Activated T-helper 1 cell treated with anti-CD3 and anti-CD28 coated beads, Interleukin-12 subunit alpha, Interleukin-12 subunit beta, Interleukin-2, Interleukin-4 antibody, amounts not matched to agents 30 ng/mL and 10 ng/mL and 1 ng/mL, durations not matched to agents 14 hours and 24 hours and 36 hours (primary cell): ENCODE measurements at regions of chr6 and their contacts with region 1.

Region 1: GRCh38 chr6:2158596-2159271 is 86.7 kb downstream of the GMDS start:
- DNase-seq: no peak
- H3K4me3 Mint-ChIP-seq: no peak overlapping the region
- H3K27ac Mint-ChIP-seq: no peak overlapping the region
- H3K4me1 Mint-ChIP-seq: peaks cover 48% of the 10 kb centered on the region
- H3K27me3 Mint-ChIP-seq: no peaks in the 10 kb centered on the region

Region 2: GRCh38 chr6:2171728-2172127 is 13.0 kb after region 1 on chr6:
- intact Hi-C with region 1: no loop called
- DNase-seq: no peak
- H3K4me3 Mint-ChIP-seq: no peak overlapping the region
- H3K27ac Mint-ChIP-seq: no peak overlapping the region
- H3K4me1 Mint-ChIP-seq: peaks cover 13% of the 10 kb centered on the region
- H3K27me3 Mint-ChIP-seq: no peaks in the 10 kb centered on the region

Region 3: GRCh38 chr6:2186516-2186915 is 27.8 kb after region 1 on chr6:
- intact Hi-C with region 1: loop called (anchors 1 kb)
- DNase-seq: no peak
- H3K4me3 Mint-ChIP-seq: no peak overlapping the region
- H3K27ac Mint-ChIP-seq: peak overlapping the region; percentile 65
- H3K4me1 Mint-ChIP-seq: peaks cover 20% of the 10 kb centered on the region
- H3K27me3 Mint-ChIP-seq: peaks cover 6% of the 10 kb centered on the region